Activated CD4-positive, alpha-beta T cell treated with anti-CD3 and anti-CD28 coated beads, Interleukin-2, amount 10 ng/mL, durations not matched to agents 24 days and 14 days (primary cell): ENCODE measurements at regions of chr1 and their contacts with region 1.

Region 1: DNA sequence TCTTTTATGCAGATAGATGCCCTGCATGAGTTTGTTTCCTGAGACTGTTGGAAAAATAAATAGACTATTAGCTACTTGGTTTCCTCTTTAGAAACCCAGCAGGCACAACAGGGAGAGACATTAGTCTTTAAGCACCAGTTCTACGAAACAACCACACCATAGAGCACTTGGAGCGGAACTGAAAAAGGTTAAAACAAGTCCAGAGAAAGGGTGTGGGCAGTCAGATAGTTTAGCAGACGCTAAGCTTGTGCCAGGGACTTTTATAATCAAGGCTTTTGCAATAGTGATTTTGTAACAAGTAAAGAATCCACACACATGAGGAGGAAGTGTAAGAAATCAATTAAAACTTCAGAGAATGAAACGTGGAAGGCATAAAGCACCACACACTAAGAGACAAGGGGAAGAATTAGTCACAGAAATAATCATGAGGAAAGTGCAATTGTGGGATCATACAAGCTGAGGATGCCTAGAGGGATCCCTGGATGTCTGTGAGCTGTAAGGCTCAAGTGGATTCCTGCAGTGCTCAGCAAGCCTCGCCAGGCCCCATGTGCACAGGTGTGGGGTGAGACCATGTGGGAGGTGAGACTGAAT is 37.8 kb upstream of the TLR5 start:
- DNase-seq: no peak
- H3K4me3 Mint-ChIP-seq: no peak overlapping the region
- H3K27ac Mint-ChIP-seq: no peak overlapping the region
- H3K4me1 Mint-ChIP-seq: no peaks in the 10 kb centered on the region
- H3K27me3 Mint-ChIP-seq: peaks cover 18% of the 10 kb centered on the region

Region 2: DNA sequence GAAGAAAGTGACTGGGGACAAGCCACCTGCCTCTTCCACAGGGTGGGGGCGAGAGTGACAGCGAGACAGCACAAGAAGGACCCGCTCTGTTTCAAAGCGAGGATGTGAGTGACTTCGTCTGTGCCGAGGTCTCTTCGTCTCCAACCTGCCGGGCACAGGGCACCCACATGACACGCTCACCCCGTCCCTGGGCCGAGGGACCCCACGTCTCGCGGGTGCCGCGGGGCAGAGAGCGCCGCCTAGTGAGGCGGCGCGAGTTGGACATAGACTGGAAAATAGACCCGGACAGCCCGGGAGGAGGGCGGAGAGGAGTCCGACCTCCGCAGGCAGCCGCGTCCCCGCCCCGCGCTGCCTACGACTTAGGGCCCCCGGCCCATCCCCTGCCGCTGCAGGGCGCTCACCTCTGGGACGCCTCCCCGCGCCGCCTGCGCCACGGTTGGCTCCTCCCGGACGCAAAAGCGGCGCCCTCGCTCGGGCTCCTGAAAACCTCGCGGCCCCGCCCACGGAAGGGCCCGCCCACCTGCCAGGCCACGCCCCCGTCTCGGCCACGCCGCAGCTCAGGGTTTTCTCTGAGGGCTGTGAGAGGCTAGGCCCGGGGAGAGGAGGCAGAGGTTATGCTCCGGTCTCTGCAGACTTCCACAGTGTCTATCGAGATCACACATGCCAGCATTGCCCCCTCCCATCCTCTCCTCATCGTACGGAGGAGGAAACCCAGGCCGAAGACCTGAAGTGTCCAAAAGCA is 37.9 kb before region 1 on chr1 and contains the start of gene TLR5:
- intact Hi-C with region 1: loop called (anchors 1 kb)
- DNase-seq: peak; percentile 97
- H3K4me3 Mint-ChIP-seq: peak within 1 kb of the TSS; percentile 72
- H3K27ac Mint-ChIP-seq: no peak within 1 kb of the TSS
- H3K4me1 Mint-ChIP-seq: peaks cover 10% of the 10 kb centered on the region
- H3K27me3 Mint-ChIP-seq: peaks cover 11% of the 10 kb centered on the region
- total RNA-seq, gene TLR5: 0.09 TPM in 1 of 2 replicates, not detected in the other

Region 3: DNA sequence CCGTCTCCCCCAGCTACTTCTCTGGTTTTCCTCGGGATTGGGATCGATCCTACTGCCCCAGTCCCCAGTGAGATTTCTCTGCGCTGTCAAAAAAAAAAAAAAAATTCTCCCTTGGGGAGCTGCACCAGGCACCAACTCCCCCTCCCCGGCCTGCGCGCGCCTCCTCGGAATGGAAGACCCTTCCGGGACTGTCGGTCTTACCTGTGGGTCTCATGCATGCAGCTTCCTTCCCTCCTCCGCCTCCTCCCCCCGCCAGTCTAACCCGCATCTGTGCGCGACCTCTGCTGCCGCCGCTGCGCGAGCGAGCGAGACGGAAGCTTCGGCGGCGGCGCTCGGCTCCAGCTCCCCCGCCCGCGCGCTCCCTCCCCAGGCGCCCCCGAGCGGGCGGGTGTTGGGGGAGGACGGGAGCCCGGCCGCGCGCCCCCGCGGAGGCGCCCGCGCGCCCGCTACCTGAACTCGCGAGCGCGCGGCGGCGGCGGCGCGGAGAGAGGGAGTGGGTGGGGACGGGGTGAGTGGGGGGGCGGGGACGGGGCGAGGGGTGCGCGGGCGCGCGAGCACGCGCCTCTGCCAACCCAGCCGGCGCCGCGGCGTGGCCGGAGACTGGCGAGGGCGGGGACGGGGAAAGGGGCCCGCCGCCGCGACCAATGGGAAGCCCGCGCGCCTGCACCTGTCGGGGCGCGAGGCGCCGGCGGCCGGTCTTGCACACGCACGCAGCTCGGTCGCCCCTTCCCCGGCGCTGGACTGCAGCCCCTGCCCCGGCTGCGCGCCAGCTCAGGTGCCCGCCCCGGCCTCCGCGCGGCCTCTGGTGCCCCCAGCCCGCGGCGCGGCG is 183.2 kb after region 1 on chr1 and contains the start of gene SUSD4:
- intact Hi-C with region 1: no loop called
- DNase-seq: peak; percentile 83
- H3K4me3 Mint-ChIP-seq: peak within 1 kb of the TSS; percentile 85
- H3K27ac Mint-ChIP-seq: no peak within 1 kb of the TSS
- H3K4me1 Mint-ChIP-seq: peaks cover 4% of the 10 kb centered on the region
- H3K27me3 Mint-ChIP-seq: peaks cover 56% of the 10 kb centered on the region
- total RNA-seq, gene SUSD4: not detected in 2 replicates